Activated CD8-positive, alpha-beta T cell treated with anti-CD3 and anti-CD28 coated beads for 36 hours (primary cell): ENCODE measurements at regions of chr1 and their contacts with region 1.

Region 1: GRCh38 chr1:245156081-245156735 is 1.4 kb downstream of the KIF26B start:
- DNase-seq: peak; percentile 90
- ATAC-seq: peak; percentile 93
- H3K4me3 Mint-ChIP-seq: peak overlapping the region; percentile 66
- H3K27ac Mint-ChIP-seq: no peak overlapping the region
- H3K4me1 Mint-ChIP-seq: peaks cover 18% of the 10 kb centered on the region
- H3K27me3 Mint-ChIP-seq: peaks cover 59% of the 10 kb centered on the region
- CTCF ChIP-seq: peak; percentile 81

Region 2: DNA sequence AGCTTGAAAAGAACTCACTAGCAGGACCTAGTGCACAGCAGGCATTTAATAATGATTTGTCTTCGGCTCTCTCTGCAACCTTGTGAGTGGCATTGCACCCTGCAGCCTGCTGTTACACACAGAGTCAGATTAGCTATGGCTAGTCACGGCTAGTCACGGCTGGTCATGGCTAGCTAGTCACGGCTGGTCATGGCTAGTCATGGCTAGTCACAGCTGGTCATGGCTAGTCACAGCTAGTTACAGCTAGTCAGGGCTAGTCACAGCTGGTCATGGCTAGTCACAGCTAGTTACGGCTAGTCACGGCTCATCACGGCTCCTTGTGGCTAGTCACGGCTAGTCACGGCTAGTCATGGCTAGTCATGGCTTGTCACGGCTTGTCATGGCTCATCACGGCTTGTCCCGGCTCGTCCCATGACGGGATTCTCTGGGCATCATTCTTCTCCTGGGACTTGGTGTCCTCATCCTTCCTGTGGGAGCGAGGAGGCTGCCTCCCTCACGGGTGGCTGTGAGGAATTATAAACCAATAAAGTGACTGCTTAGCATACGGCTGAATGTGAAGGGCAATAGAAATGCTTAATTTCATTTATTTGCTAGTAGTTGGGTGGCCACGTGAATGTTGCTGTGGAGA is 13.9 kb before region 1 on chr1:
- CTCF ChIA-PET with region 1: interaction called, 12 read pairs
- POLR2A ChIA-PET with region 1: no interaction called
- intact Hi-C with region 1: no loop called
- DNase-seq: no peak
- ATAC-seq: no peak
- H3K4me3 Mint-ChIP-seq: no peak overlapping the region
- H3K27ac Mint-ChIP-seq: no peak overlapping the region
- H3K4me1 Mint-ChIP-seq: no peaks in the 10 kb centered on the region
- H3K27me3 Mint-ChIP-seq: peaks cover 7% of the 10 kb centered on the region
- CTCF ChIP-seq: no peak

Region 3: GRCh38 chr1:245316784-245317183 is 160.6 kb after region 1 on chr1:
- CTCF ChIA-PET with region 1: no interaction called
- POLR2A ChIA-PET with region 1: no interaction called
- intact Hi-C with region 1: no loop called
- DNase-seq: no peak
- ATAC-seq: no peak
- H3K4me3 Mint-ChIP-seq: no peak overlapping the region
- H3K27ac Mint-ChIP-seq: no peak overlapping the region
- H3K4me1 Mint-ChIP-seq: peaks cover 2% of the 10 kb centered on the region
- H3K27me3 Mint-ChIP-seq: peaks cover 2% of the 10 kb centered on the region
- CTCF ChIP-seq: no peak

Region 4: GRCh38 chr1:245380790-245381535 is 224.8 kb after region 1 on chr1:
- CTCF ChIA-PET with region 1: interaction called, 16 read pairs
- POLR2A ChIA-PET with region 1: no interaction called
- intact Hi-C with region 1: loop called (anchors 2 kb)
- DNase-seq: peak; percentile 19
- ATAC-seq: no peak
- H3K4me3 Mint-ChIP-seq: no peak overlapping the region
- H3K27ac Mint-ChIP-seq: no peak overlapping the region
- H3K4me1 Mint-ChIP-seq: peaks cover 33% of the 10 kb centered on the region
- H3K27me3 Mint-ChIP-seq: no peaks in the 10 kb centered on the region
- CTCF ChIP-seq: peak; percentile 49

Region 5: GRCh38 chr1:245441689-245442088 is 285.5 kb after region 1 on chr1:
- CTCF ChIA-PET with region 1: no interaction called
- POLR2A ChIA-PET with region 1: no interaction called
- intact Hi-C with region 1: no loop called
- DNase-seq: no peak
- ATAC-seq: no peak
- H3K4me3 Mint-ChIP-seq: no peak overlapping the region
- H3K27ac Mint-ChIP-seq: no peak overlapping the region
- H3K4me1 Mint-ChIP-seq: peaks cover 5% of the 10 kb centered on the region
- H3K27me3 Mint-ChIP-seq: peaks cover 21% of the 10 kb centered on the region
- CTCF ChIP-seq: no peak

Region 6: DNA sequence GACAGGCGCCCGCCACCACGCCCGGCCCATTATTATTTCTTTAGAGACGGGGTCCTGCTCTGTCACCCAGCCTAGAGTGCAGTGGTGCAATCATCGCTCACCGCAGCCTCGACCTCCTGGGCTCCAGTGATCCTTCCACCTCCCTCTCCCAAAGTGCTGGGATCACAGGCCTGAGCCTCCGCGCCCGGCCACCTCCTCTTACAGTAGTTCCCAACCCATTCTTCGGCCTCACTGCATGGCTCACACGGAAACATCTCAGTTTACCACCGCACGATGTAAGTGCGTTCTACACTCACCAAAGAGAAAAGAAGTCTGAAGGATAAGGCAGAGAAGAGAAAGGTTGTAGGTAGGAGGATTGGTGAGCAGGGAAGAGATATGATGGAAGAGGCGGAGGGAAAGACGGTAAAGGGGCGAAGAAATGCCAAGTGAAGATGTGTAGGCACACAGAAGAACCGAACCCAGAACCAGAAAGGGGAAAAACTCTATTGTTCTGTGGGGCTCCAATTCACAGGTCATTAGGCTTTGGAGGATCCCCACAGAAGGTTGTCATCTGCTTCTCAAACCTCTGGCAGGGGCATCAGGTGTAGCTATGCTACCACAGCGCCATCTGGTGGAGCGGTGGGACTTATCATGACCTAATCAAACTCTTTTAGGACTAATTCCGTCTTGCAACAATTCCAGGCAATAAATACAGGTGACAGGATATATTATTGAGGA is 846.7 kb after region 1 on chr1:
- CTCF ChIA-PET with region 1: interaction called, 11 read pairs
- POLR2A ChIA-PET with region 1: no interaction called
- intact Hi-C with region 1: loop called (anchors 5 kb)
- DNase-seq: peak; percentile 93
- ATAC-seq: peak; percentile 74
- H3K4me3 Mint-ChIP-seq: no peak overlapping the region
- H3K27ac Mint-ChIP-seq: no peak overlapping the region
- H3K4me1 Mint-ChIP-seq: no peaks in the 10 kb centered on the region
- H3K27me3 Mint-ChIP-seq: no peaks in the 10 kb centered on the region
- CTCF ChIP-seq: peak; percentile 88

Region 7: DNA sequence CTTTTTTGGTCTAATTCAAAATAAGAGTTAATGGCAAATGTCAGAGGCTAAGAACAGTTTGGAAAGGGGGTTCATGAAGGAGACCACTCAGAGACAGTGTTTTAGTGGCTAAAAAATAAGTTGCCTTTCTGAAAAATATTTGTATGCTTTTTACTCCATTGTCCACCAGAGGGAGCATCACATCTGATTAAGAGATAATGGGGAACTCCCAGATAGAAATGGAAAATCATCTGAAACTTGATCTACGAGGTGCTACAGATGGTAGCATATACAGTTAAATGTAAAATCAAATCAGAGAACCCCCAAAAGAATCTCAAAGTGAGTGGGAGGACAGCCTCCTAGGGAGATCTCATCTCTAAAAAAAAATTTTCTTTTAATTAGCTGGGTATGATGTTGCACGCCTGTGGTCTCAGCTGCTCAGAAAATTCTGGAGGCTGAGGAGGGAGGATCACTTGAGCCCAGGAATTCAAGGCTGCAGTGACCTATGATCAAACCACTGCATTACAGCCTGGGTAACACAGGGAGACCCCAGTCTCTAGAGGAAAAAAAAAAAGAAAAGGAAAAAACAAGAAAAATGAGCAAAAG is 1341.2 kb after region 1 on chr1:
- CTCF ChIA-PET with region 1: interaction called, 11 read pairs
- POLR2A ChIA-PET with region 1: no interaction called
- intact Hi-C with region 1: no loop called
- DNase-seq: peak; percentile 14
- ATAC-seq: peak; percentile 85
- H3K4me3 Mint-ChIP-seq: no peak overlapping the region
- H3K27ac Mint-ChIP-seq: peak overlapping the region; percentile 61
- H3K4me1 Mint-ChIP-seq: peaks cover 13% of the 10 kb centered on the region
- H3K27me3 Mint-ChIP-seq: no peaks in the 10 kb centered on the region
- CTCF ChIP-seq: peak; percentile 74